GM10248 (cell line): ENCODE measurements at regions of chr3 and their contacts with region 1.

Region 1: GRCh38 chr3:142279965-142280590 is 54.7 kb upstream of the GK5 start:
- DNase-seq: peak; percentile 76
- CTCF ChIP-seq: peak; percentile 63

Region 2: GRCh38 chr3:142022381-142022780 is 257.7 kb before region 1 on chr3:
- CTCF ChIA-PET with region 1: interaction called, 13 read pairs
- POLR2A ChIA-PET with region 1: no interaction called
- DNase-seq: peak; percentile 26
- CTCF ChIP-seq: peak; percentile 58

Region 3: GRCh38 chr3:142124243-142124642 is 155.8 kb before region 1 on chr3:
- CTCF ChIA-PET with region 1: interaction called, 14 read pairs
- POLR2A ChIA-PET with region 1: no interaction called
- DNase-seq: no peak
- CTCF ChIP-seq: no peak

Region 4: DNA sequence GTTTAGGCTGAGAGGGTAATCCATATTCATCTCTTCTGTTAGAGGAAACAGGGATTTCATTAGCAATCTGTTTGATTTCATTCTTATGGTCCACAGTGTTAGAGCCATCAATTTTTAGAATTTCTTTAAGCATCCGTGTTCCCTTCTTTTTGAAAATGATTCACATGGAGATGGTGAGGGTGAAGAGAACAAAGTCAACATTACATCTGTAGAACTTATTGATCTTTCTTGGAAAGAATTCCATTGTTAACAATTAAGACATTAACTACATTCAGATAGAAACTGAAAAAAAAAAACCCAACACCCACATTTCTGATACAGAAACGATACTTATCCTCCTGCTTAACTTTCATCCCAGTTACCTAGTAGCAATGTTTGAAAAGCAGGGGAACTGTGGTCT is 52.3 kb after region 1 on chr3:
- CTCF ChIA-PET with region 1: no interaction called
- POLR2A ChIA-PET with region 1: no interaction called
- DNase-seq: no peak
- CTCF ChIP-seq: no peak